Mammary epithelial cell (primary cell): ENCODE measurements at regions of chr5 and their contacts with region 1.

Region 1: GRCh38 chr5:38404667-38405276 is 146.4 kb downstream of the EGFLAM start:
- DNase-seq: peak; percentile 36
- H3K4me3 ChIP-seq: no peak overlapping the region
- H3K27ac ChIP-seq: no peak overlapping the region
- H3K4me1 ChIP-seq: no peaks in the 10 kb centered on the region
- H3K27me3 ChIP-seq: no peaks in the 10 kb centered on the region
- CTCF ChIP-seq: peak; percentile 59 to 87

Region 2: GRCh38 chr5:38265546-38266179 is 139.1 kb before region 1 on chr5:
- CTCF ChIA-PET with region 1: no interaction called
- dilution Hi-C with region 1: no loop called
- in situ Hi-C with region 1: loop called in 1 of 2 experiments (anchors 10 kb)
- intact Hi-C with region 1: loop called (anchors 1 kb)
- DNase-seq: peak; percentile 29
- H3K4me3 ChIP-seq: no peak overlapping the region
- H3K27ac ChIP-seq: no peak overlapping the region
- H3K4me1 ChIP-seq: no peaks in the 10 kb centered on the region
- H3K27me3 ChIP-seq: peaks cover 7% of the 10 kb centered on the region
- CTCF ChIP-seq: peak; percentile 73 to 81

Region 3: DNA sequence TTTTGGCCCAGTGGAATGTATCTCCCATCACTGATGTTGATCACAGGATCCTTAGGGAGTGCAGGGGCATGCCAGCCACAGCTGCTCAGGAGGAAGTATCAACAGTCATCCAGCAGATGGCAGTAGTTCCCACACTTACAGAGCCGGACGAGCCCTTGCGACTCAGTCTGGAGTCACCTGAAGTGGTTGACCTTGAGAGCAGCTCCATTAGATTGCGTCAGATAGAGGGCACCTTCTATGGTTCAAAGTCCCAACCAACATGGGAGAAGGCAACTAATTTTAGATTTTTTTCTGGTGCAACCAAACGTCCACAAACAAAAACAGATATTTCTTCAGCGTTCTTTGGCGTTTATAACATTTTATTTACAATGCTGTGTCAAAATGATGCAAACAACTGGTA is 21.9 kb before region 1 on chr5:
- CTCF ChIA-PET with region 1: no interaction called
- dilution Hi-C with region 1: no loop called
- in situ Hi-C with region 1: no loop called
- intact Hi-C with region 1: loop called (anchors 1 kb)
- DNase-seq: peak; percentile 50
- H3K4me3 ChIP-seq: no peak overlapping the region
- H3K27ac ChIP-seq: no peak overlapping the region
- H3K4me1 ChIP-seq: no peaks in the 10 kb centered on the region
- H3K27me3 ChIP-seq: peaks cover 3% of the 10 kb centered on the region
- CTCF ChIP-seq: peak; percentile 86 to 92